Dorsolateral prefrontal cortex (tissue), 120 donors: ENCODE measurements at regions of chr12 and their contacts with region 1.

Region 1: GRCh38 chr12:110468212-110469048 is at the starts of genes FAM216A and GPN3:
- DNase-seq: peak; percentile 90 to 97 (median 96)
- H3K4me3 ChIP-seq: peak within 1 kb of the TSS; percentile 71 to 100 (median 91)
- H3K27ac ChIP-seq: peak within 1 kb of the TSS; percentile 72 to 99 (median 98)
- H3K27me3 ChIP-seq: no peaks in the 10 kb centered on the region
- CTCF ChIP-seq: peak in 28 of 56 donors; percentile 10 to 54 (median 22)
- total RNA-seq, gene FAM216A: 10.4 to 38.9 (median 27.5) TPM
- total RNA-seq, gene GPN3: 8.3 to 24.4 (median 16.5) TPM

Region 2: DNA sequence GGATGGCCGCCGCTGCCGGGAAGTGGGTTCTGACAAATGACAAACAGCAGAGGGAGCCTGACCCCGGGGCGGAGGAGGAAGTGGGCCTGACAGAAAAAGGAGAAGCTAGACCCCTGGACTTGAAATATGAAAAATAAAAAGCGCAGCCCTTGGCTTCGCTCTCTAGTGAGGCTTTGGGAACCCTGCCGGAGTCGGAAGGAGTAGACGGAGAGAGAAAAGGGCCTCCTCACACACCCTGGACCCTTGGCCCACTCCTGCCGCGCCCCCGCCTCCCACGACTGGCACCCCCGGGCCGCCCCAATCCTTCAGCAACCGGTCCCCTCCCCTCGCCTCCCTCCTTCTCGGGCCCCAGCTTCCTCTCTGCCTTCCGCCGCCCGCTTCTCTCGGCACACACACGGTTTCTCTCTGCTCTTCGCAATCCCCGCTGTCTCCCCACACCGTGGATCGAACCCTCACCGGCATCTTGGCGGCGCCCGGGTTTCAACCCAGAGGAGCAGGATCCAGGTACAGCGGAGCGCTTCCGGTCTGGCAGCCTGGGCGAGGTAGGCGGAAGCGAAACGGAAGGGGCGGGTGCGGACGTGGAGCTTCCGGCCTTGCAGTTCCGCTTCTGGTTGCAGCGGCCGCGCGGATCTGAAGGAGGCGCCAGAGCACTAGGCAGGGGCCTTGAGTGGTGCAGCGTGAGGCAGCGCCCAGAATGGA is 18.5 kb before region 1 on chr12 and contains the start of gene ARPC3:
- intact Hi-C with region 1: loop called in 1 of 2 experiments (anchors 2 kb)
- DNase-seq: peak; percentile 89 to 95 (median 94)
- H3K4me3 ChIP-seq: peak within 1 kb of the TSS; percentile 60 to 97 (median 86)
- H3K27ac ChIP-seq: peak within 1 kb of the TSS; percentile 36 to 96 (median 89)
- H3K27me3 ChIP-seq: no peaks in the 10 kb centered on the region
- CTCF ChIP-seq: peak; percentile 67 to 96 (median 87)
- total RNA-seq, gene ARPC3: 78.9 to 178 (median 137) TPM

Region 3: GRCh38 chr12:110501752-110502738 is 33.6 kb after region 1 on chr12 and contains the starts of genes RAD9B and VPS29:
- intact Hi-C with region 1: loop called (anchors 1 kb)
- DNase-seq: peak; percentile 94 to 98 (median 97)
- H3K4me3 ChIP-seq: peak within 1 kb of the TSS; percentile 69 to 100 (median 97)
- H3K27ac ChIP-seq: peak within 1 kb of the TSS; percentile 61 to 97 (median 88)
- H3K27me3 ChIP-seq: no peaks in the 10 kb centered on the region
- CTCF ChIP-seq: peak in 41 of 56 donors; percentile 5 to 64 (median 31)
- total RNA-seq, gene RAD9B: 0.24 to 5.3 (median 1.2) TPM
- total RNA-seq, gene VPS29: 50.5 to 114 (median 88.6) TPM

Region 4: DNA sequence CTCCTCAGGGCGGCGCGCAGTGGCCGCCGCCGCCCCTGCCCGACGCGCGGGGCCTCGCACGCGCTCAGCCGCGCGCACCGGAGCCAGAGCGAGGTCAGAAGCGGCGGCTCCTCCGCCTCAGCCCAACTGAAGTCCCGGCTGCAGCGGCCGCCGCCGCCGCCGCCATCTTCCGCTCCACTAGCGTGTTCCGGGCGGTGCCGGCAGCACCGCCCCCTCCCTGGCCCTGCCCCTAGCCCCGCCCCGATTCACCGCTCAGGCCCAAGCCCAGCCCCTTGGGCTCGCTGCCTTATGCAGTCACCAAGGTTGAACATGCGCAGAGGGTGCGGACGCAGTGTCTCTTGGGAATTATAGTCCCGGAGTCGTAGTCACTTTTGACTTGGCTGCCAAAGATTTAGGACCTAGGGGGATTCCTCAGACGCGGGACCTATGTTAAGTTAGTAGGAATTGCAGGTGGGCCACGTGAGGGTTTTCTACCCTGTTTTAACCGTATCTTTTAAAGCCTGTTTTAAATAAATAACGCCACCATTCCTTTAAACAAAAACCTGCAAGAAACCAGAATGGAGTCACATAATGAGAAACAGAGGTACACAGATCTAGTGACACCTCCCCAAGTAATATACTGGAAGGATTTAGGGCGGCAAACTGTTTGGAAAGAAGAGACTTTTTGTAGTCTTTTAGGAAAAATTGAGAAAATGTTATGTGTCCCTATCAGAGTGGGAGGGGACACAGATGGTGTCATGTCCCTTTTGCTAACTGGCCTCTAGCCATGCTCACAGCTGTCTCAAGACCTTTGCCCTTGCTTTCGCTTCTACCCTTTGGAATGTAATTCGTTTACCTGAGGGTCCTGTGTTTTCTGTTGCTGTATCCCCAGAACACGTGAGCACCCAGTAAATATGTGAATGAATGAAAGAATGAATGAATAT is 115.0 kb after region 1 on chr12 and contains the start of gene PPTC7:
- intact Hi-C with region 1: loop called (anchors 2 to 10 kb)
- DNase-seq: peak; percentile 96 to 98 (median 98)
- H3K4me3 ChIP-seq: peak within 1 kb of the TSS; percentile 58 to 98 (median 88)
- H3K27ac ChIP-seq: peak within 1 kb of the TSS; percentile 9 to 96 (median 87)
- H3K27me3 ChIP-seq: no peaks in the 10 kb centered on the region
- CTCF ChIP-seq: peak in 20 of 56 donors; percentile 10 to 49 (median 28)
- total RNA-seq, gene PPTC7: 13.6 to 36.5 (median 24.6) TPM

Region 5: DNA sequence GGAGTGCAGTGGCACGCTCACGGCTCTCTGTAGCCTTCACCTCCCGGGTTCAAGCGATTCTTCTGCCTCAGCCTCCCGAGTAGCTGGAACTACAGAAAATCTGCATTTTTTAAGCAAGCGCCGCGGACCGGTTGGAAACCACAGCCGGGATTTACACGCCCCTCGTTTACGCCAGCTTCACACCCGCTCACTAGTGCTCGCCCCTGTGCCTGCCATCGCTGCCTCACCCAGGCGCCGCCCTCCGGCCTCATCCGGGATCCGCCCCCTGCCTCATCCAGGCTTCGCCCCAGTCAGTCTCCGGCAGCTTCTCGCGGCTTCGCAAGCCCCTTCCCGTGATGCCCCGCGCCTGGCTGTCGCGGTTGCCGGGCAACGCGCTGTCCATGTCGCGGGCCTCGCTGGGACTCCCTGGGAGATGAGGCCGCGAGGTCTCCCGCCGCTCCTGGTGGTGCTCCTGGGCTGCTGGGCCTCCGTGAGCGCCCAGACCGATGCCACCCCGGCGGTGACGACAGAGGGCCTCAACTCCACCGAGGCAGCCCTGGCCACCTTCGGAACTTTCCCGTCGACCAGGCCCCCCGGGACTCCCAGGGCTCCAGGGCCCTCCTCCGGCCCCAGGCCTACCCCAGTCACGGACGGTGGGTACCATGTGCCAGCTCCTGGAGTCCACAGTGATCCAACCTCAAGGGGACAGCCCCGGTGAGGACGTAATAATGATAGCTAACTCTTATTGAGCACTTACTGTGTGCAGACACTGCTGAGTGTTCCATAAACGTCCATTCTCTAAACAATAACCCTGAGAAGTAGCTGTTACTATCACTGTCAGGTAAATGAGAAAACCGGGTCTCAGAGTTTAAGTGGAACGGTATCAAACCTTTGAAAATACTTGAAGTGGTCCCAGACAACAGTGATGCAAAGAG is 145.6 kb after region 1 on chr12 and contains the start of gene TCTN1:
- intact Hi-C with region 1: loop called in 1 of 2 experiments (anchors 5 kb)
- DNase-seq: peak; percentile 94 to 98 (median 96)
- H3K4me3 ChIP-seq: peak within 1 kb of the TSS; percentile 61 to 98 (median 82)
- H3K27ac ChIP-seq: peak within 1 kb of the TSS in 58 of 59 donors; percentile 52 to 92 (median 81)
- H3K27me3 ChIP-seq: no peaks in the 10 kb centered on the region
- CTCF ChIP-seq: peak in 53 of 56 donors; percentile 13 to 68 (median 43)
- total RNA-seq, gene TCTN1: 26.4 to 77.4 (median 40.6) TPM

Region 6: DNA sequence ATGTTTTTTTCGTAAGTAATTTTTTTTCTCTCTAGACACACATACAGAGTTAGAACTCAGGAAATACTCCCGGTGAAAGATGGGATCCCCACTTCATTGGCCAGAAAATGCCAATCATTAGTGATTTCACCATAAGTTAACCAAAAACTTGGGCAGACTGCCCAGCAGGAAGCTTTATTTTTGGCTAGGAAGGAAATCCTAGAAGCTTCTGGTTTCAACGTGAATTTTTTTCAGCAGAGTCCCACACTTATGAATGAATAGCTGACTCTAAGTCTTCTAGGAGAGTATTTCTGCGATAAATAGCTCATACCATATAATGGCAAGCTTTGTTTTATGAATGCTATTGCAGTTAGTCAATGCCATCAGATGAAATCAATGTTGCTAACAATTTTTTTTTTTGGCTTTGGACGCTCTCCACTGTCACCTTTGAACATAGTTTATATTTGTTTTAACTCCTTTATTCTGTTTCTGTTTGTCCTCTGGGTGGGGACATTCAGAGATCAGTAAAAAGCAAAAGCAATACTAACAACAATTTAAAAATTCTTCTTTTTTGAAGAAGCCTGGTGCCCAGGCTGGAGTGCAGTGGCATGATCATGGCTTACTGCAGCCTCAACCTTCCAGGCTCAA is 264.8 kb after region 1 on chr12:
- intact Hi-C with region 1: loop called in 1 of 2 experiments (anchors 10 kb)
- DNase-seq: no peak
- H3K4me3 ChIP-seq: peak overlapping the region in 6 of 59 donors; percentile 1 to 11 (median 4)
- H3K27ac ChIP-seq: peak overlapping the region in 9 of 59 donors; percentile 5 to 57 (median 33)
- H3K27me3 ChIP-seq: no peaks in the 10 kb centered on the region
- CTCF ChIP-seq: no peak